Motor neuron (in vitro differentiated cells): ENCODE measurements at regions of chrX and their contacts with region 1.

Region 1: DNA sequence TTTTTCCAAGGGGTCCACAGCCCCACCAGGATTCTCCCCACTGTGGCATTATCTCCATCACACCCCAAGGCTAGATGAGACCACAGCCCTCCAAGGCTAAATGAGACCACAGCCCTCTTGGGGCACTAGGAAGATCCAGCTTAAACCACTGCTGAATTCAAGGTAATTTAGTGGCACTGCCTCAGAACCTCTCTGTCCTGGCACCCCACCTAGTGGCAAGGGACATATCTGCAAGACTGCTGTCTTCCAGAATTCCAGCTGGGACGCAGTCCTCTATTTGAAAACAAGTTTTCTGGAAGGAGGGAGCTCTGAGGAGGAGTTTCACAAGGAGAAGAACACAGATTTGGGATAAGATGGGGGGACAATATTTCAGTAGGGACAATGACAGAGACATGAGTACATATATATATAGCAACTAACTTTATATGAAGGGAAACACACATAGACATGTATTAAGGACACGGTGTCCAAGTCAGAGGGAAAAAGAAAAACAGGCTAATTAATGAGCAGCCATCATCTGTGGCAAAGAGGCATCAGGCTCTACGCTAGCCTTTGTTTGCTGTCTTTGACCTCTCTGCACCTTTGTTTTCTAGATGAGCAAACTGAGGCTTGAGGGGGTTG is 9.3 kb downstream of the CETN2 start:
- ATAC-seq: peak in 3 of 8 experiments; percentile 18 to 33 (median 25)
- H3K4me3 ChIP-seq: no peak overlapping the region
- H3K27ac ChIP-seq: no peak overlapping the region
- H3K4me1 ChIP-seq: no peaks in the 10 kb centered on the region

Region 2: GRCh38 chrX:152658302-152658701 is 163.0 kb before region 1 on chrX:
- in situ Hi-C with region 1: loop called in 1 of 9 experiments (anchors 25 kb)
- ATAC-seq: no peak
- H3K4me3 ChIP-seq: no peak overlapping the region
- H3K27ac ChIP-seq: no peak overlapping the region
- H3K4me1 ChIP-seq: no peaks in the 10 kb centered on the region